B cell (primary cell): ENCODE measurements at regions of chr20 and their contacts with region 1.

Region 1: GRCh38 chr20:62972270-62973032 is 19.9 kb downstream of the SLC17A9 start:
- DNase-seq: peak; percentile 88
- ATAC-seq: peak; percentile 96
- H3K4me3 ChIP-seq: peak overlapping the region in 3 of 5 experiments; percentile 38 to 49 (median 45)
- H3K4me3 Mint-ChIP-seq: peak overlapping the region; percentile 82
- H3K27ac ChIP-seq: no peak overlapping the region
- H3K27ac Mint-ChIP-seq: peak overlapping the region; percentile 37
- H3K4me1 ChIP-seq: peaks cover 21 to 26% of the 10 kb centered on the region in 2 donors
- H3K4me1 Mint-ChIP-seq: peaks cover 32% of the 10 kb centered on the region
- H3K27me3 ChIP-seq: peaks cover 0 to 65% (median 28%) of the 10 kb centered on the region in 4 experiments
- H3K27me3 Mint-ChIP-seq: peaks cover 39% of the 10 kb centered on the region
- CTCF ChIP-seq: peak; percentile 85

Region 2: GRCh38 chr20:62959101-62959971 is 13.1 kb before region 1 on chr20:
- CTCF ChIA-PET with region 1: interaction called, 24 read pairs
- POLR2A ChIA-PET with region 1: interaction called, 8 read pairs
- intact Hi-C with region 1: loop called (anchors 1 kb)
- DNase-seq: no peak
- ATAC-seq: peak; percentile 8
- H3K4me3 ChIP-seq: no peak overlapping the region
- H3K4me3 Mint-ChIP-seq: peak overlapping the region; percentile 29
- H3K27ac ChIP-seq: no peak overlapping the region
- H3K27ac Mint-ChIP-seq: no peak overlapping the region
- H3K4me1 ChIP-seq: peaks cover 22 to 29% of the 10 kb centered on the region in 2 donors
- H3K4me1 Mint-ChIP-seq: peaks cover 31% of the 10 kb centered on the region
- H3K27me3 ChIP-seq: no peaks in the 10 kb centered on the region
- H3K27me3 Mint-ChIP-seq: no peaks in the 10 kb centered on the region
- CTCF ChIP-seq: no peak

Region 3: GRCh38 chr20:63056236-63056948 is 83.9 kb after region 1 on chr20:
- CTCF ChIA-PET with region 1: interaction called, 4 read pairs
- POLR2A ChIA-PET with region 1: no interaction called
- intact Hi-C with region 1: loop called (anchors 1 kb)
- DNase-seq: peak; percentile 63
- ATAC-seq: peak; percentile 63
- H3K4me3 ChIP-seq: no peak overlapping the region
- H3K4me3 Mint-ChIP-seq: no peak overlapping the region
- H3K27ac ChIP-seq: no peak overlapping the region
- H3K27ac Mint-ChIP-seq: no peak overlapping the region
- H3K4me1 ChIP-seq: peaks cover 0 to 7% of the 10 kb centered on the region in 2 donors
- H3K4me1 Mint-ChIP-seq: no peaks in the 10 kb centered on the region
- H3K27me3 ChIP-seq: peaks cover 0 to 39% (median 3%) of the 10 kb centered on the region in 4 experiments
- H3K27me3 Mint-ChIP-seq: peaks cover 13% of the 10 kb centered on the region
- CTCF ChIP-seq: peak; percentile 88

Region 4: DNA sequence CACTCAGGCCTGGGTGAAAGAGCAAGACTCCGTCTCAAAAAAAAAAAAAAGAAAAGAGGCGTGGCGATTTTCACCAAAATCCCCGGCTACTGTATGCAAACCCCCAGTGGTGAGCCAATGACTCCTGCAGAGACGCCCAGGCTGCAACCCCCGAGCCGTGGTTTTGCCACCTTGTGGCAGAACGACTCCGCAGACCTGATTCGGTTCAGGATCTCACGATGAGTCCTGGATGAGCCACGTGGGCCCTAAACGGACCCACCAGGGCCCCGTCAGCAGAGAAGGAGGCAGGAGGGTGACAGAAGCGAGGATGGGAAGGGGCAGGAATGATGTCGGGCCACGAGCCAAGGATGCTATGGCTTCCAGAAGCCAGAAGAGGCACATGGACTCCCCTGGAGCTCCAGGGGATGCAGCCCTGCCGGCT is 809.6 kb after region 1 on chr20:
- CTCF ChIA-PET with region 1: no interaction called
- POLR2A ChIA-PET with region 1: no interaction called
- intact Hi-C with region 1: no loop called
- DNase-seq: peak; percentile 55
- ATAC-seq: no peak
- H3K4me3 ChIP-seq: no peak overlapping the region
- H3K4me3 Mint-ChIP-seq: no peak overlapping the region
- H3K27ac ChIP-seq: no peak overlapping the region
- H3K27ac Mint-ChIP-seq: no peak overlapping the region
- H3K4me1 ChIP-seq: no peaks in the 10 kb centered on the region
- H3K4me1 Mint-ChIP-seq: peaks cover 2% of the 10 kb centered on the region
- H3K27me3 ChIP-seq: no peaks in the 10 kb centered on the region
- H3K27me3 Mint-ChIP-seq: no peaks in the 10 kb centered on the region
- CTCF ChIP-seq: no peak